ENCODE measurements at regions of chr20 and their contacts with region 1.

Region 1: DNA sequence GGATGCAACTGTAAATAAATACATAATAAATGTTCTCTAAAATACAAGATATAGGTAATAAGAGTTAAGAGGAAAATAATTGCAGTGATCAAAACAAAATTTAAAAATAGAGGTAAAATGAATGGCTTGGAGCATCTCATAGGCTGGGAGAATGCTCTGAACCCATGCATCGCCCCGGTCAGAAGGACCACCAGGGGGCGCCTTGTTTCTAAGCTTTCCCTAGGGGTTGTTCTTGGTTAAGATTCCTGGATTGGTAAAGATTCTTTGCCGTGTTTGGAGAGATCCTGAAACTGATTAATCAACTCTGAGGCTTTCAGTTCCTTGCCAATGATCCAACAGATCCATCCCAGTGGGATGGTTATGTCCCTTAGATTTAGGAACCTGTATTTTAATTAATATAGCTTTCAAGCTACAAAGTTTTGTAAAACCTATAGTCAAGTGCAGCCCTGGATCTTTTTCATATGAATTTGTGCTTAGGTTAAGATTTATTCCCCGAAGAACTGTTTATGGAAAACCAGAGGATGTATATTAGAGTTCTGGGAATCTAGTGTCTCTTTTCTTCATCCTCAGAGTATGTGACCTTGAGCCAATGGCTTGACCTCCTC is 45.3 kb upstream of the PRELID3B start:
- DNase-seq: peak; percentile 67 to 85 (median 78)
- ATAC-seq: peak; percentile 92
- H3K4me3 ChIP-seq: no peak overlapping the region
- H3K4me3 Mint-ChIP-seq: no peak overlapping the region
- H3K27ac ChIP-seq: no peak overlapping the region
- H3K27ac Mint-ChIP-seq: peak overlapping the region in 4 of 9 donors; percentile 10 to 58 (median 40)
- H3K4me1 ChIP-seq: peaks cover 0 to 5% of the 10 kb centered on the region in 2 donors
- H3K4me1 Mint-ChIP-seq: peaks cover 0 to 7% (median 5%) of the 10 kb centered on the region in 7 donors
- H3K27me3 ChIP-seq: no peaks in the 10 kb centered on the region
- H3K27me3 Mint-ChIP-seq: peaks cover 0 to 32% (median 0%) of the 10 kb centered on the region in 5 donors

Region 2: GRCh38 chr20:59023616-59024015 is 64.3 kb before region 1 on chr20:
- CTCF ChIA-PET with region 1: no interaction called
- POLR2A ChIA-PET with region 1: no interaction called
- intact Hi-C with region 1: no loop called
- DNase-seq: no peak
- ATAC-seq: no peak
- H3K4me3 ChIP-seq: no peak overlapping the region
- H3K4me3 Mint-ChIP-seq: no peak overlapping the region
- H3K27ac ChIP-seq: no peak overlapping the region
- H3K27ac Mint-ChIP-seq: no peak overlapping the region
- H3K4me1 ChIP-seq: peaks cover 11 to 19% of the 10 kb centered on the region in 2 donors
- H3K4me1 Mint-ChIP-seq: peaks cover 33 to 50% (median 40%) of the 10 kb centered on the region in 7 donors
- H3K27me3 ChIP-seq: no peaks in the 10 kb centered on the region
- H3K27me3 Mint-ChIP-seq: no peaks in the 10 kb centered on the region

Region 3: GRCh38 chr20:59102841-59103299 is 14.9 kb after region 1 on chr20:
- CTCF ChIA-PET with region 1: interaction called, 11 read pairs
- POLR2A ChIA-PET with region 1: no interaction called
- intact Hi-C with region 1: no loop called
- DNase-seq: no peak
- ATAC-seq: peak; percentile 40
- H3K4me3 ChIP-seq: no peak overlapping the region
- H3K4me3 Mint-ChIP-seq: no peak overlapping the region
- H3K27ac ChIP-seq: no peak overlapping the region
- H3K27ac Mint-ChIP-seq: peak overlapping the region in 2 of 9 donors; percentile 26 to 29
- H3K4me1 ChIP-seq: peaks cover 0 to 7% of the 10 kb centered on the region in 2 donors
- H3K4me1 Mint-ChIP-seq: peaks cover 12 to 27% (median 24%) of the 10 kb centered on the region in 7 donors
- H3K27me3 ChIP-seq: no peaks in the 10 kb centered on the region
- H3K27me3 Mint-ChIP-seq: peaks cover 0 to 19% (median 0%) of the 10 kb centered on the region in 5 donors

Region 4: GRCh38 chr20:59149651-59150504 is 61.9 kb after region 1 on chr20:
- CTCF ChIA-PET with region 1: interaction called, 7 read pairs
- POLR2A ChIA-PET with region 1: no interaction called
- intact Hi-C with region 1: loop called (anchors 1 to 5 kb)
- DNase-seq: peak; percentile 51 to 93 (median 88)
- ATAC-seq: peak; percentile 91
- H3K4me3 ChIP-seq: peak overlapping the region; percentile 33
- H3K4me3 Mint-ChIP-seq: peak overlapping the region; percentile 56 to 91 (median 82)
- H3K27ac ChIP-seq: peak overlapping the region; percentile 98
- H3K27ac Mint-ChIP-seq: peak overlapping the region; percentile 96 to 100 (median 99)
- H3K4me1 ChIP-seq: peaks cover 83% of the 10 kb centered on the region in 2 donors
- H3K4me1 Mint-ChIP-seq: peaks cover 53 to 98% (median 94%) of the 10 kb centered on the region in 7 donors
- H3K27me3 ChIP-seq: no peaks in the 10 kb centered on the region
- H3K27me3 Mint-ChIP-seq: no peaks in the 10 kb centered on the region